ENCODE measurements at regions of chr10 and their contacts with region 1.

Region 1: DNA sequence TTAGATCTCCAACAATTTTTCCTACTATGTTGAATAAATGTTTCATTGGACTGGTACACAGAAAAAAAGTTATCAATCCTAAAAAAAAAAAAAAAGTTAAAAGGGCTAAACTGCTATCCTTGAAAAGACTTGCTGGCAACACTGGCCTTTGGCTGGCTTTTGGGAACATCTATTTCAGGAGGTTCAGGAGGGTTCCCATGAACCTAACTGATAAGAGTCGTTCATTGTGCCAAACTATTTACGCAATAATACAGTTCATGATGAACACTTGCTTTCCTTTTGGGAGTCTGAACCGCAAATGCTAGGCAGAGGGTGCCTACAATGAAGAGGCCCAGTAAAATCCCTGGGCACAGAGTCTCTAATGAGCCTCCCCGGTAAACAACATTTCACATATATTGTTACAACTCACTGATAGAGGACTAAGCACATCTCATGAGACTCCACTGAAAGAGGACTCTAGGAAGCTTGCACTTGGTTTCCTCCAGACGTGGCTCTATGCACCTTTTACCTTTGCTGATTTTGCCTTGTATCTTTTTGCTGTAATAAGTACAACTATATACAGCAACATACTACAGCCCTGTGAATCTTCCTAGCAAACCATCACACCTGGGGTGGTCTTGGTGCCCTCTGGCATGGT is 45.0 kb downstream of the ZFAND4 start:
- DNase-seq: no peak
- H3K4me3 ChIP-seq: no peak overlapping the region
- H3K27ac ChIP-seq: no peak overlapping the region
- H3K4me1 ChIP-seq: no peaks in the 10 kb centered on the region
- H3K27me3 ChIP-seq: no peaks in the 10 kb centered on the region
- CTCF ChIP-seq: no peak

Region 2: DNA sequence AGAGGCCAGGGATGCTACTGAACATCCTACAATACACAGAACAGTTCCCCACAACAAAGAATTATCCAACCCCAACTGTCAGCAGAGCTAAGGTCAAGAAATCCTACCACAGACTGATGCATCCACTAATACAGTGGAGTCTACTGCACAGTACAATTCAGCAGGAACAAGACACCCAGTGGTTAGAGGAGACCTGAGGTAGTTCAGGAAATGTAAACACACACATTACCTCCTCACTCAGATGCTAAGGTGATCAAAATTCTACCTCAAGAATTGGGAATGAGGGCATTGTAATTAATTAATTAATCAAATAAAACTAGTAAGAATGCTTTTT is 46.3 kb before region 1 on chr10:
- CTCF ChIA-PET with region 1: interaction called, 21 read pairs
- dilution Hi-C with region 1: no loop called
- in situ Hi-C with region 1: no loop called
- intact Hi-C with region 1: no loop called
- DNase-seq: no peak
- H3K4me3 ChIP-seq: no peak overlapping the region
- H3K27ac ChIP-seq: no peak overlapping the region
- H3K4me1 ChIP-seq: no peaks in the 10 kb centered on the region
- H3K27me3 ChIP-seq: no peaks in the 10 kb centered on the region
- CTCF ChIP-seq: no peak

Region 3: DNA sequence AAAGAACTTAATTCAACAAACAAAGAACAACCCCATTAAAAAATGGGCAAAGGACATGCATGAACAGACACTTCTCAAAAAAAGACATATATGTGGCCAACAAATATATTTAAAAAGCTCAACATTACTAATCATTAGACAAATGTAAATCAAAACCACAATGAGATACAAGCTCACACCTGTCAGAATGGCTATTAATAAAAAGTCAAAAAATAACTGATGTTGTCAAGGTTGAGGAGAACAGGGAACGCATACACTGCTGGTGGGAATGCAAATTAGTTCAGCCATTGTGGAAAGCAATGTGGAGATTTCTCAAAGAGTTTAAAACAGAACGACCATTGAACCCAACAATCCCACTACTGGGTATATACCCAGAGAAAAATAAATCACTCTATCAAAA is 25.9 kb after region 1 on chr10:
- CTCF ChIA-PET with region 1: no interaction called
- dilution Hi-C with region 1: no loop called
- in situ Hi-C with region 1: no loop called
- intact Hi-C with region 1: no loop called
- DNase-seq: no peak
- H3K4me3 ChIP-seq: no peak overlapping the region
- H3K27ac ChIP-seq: no peak overlapping the region
- H3K4me1 ChIP-seq: no peaks in the 10 kb centered on the region
- H3K27me3 ChIP-seq: no peaks in the 10 kb centered on the region
- CTCF ChIP-seq: no peak